ENCODE measurements at regions of chr3 and their contacts with region 1.

Region 1: DNA sequence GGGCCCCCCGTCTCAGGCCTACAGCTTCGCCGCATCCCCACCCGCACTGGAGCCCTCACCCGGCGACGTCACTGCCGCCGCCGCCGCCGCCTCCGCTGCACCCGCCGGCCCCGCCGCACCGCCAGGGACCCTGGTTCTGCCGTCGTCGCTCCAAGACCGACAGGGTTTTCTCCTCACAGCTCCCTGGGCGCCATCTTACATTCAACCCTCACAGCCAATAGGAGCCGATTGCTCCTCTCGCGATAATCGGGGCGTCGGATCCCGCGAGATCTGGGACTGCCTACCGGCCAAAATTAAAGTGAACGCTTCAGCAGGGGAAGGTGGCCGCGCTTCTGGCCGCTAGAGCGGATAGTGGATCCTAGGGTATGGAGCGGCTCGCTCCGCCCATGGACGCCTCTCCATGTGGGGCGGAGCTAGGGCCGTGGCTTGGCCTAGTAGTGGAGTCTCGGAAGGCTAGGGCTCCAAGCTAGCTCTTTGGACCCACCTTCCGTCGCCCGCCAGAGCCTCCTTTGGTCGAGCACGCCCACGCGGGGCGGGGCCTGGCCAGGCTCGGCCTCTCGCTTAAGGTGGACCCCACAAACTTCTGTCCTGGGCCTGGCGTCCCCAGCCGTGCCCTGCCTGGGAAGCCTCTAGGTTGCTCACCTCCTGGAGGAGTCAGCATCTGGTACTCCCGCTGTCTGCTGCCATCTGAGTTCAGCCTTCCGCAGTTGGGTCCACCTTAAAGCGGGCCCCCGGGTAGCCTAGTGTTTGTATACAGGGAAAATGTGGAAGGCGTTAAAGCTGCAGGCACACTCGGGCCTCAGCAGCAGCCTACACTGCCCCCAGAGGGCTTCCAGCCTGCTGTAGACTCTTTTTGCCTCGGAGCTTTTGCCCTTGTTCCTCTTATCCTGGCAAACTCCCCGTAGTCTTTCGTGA is at the start of gene QRICH1:
- DNase-seq: peak; percentile 99
- H3K4me3 ChIP-seq: peak within 1 kb of the TSS; percentile 78 to 100 (median 96)
- H3K27ac ChIP-seq: peak within 1 kb of the TSS; percentile 93 to 98 (median 97)
- H3K4me1 ChIP-seq: peaks cover 44 to 52% (median 50%) of the 10 kb centered on the region in 4 donors
- H3K27me3 ChIP-seq: no peaks in the 10 kb centered on the region
- CTCF ChIP-seq: peak; percentile 41 to 59 (median 49)
- EP300 ChIP-seq: no peak
- POLR2A ChIP-seq: peak; percentile 61
- total RNA-seq, gene QRICH1: 81.8 to 228 (median 91.2) TPM

Region 2: DNA sequence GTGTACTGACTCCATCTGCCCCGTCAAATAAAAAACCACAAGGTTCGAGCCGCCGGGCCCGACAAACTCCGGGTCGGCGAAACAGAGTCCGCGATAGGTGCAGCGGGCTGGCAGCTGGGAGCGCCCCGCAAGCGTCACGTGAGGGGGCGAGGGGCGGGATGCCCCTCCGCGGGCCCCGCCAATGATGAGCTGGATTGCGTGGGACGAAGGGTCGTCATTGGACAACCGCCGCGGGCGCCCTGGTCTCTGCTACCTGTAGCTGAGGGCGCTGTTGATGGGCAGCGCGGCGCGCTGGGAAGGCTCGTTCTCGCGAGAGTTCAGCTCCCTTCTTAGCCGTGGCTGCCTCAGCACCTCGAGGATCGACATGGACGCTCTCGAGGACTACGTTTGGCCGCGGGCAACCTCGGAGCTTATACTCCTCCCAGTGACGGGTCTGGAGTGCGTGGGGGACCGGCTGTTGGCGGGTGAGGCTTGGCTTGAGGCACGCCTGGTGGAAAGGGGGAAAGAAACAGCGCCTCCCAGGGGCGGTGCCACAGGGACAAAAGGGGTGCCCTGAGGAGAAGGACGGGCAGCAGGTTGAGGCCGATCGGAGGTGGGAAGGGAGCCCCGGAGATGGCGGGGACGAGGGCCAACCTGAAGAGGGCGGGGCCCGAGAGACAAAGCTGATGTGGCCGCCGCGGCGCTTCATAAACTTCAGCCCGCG is 86.9 kb before region 1 on chr3 and contains the start of gene WDR6:
- intact Hi-C with region 1: loop called (anchors 10 kb)
- DNase-seq: peak; percentile 99
- H3K4me3 ChIP-seq: peak within 1 kb of the TSS; percentile 65 to 94 (median 78)
- H3K27ac ChIP-seq: peak within 1 kb of the TSS; percentile 94 to 99 (median 94)
- H3K4me1 ChIP-seq: peaks cover 16 to 37% (median 30%) of the 10 kb centered on the region in 4 donors
- H3K27me3 ChIP-seq: no peaks in the 10 kb centered on the region
- CTCF ChIP-seq: peak; percentile 41 to 60 (median 41)
- EP300 ChIP-seq: no peak
- POLR2A ChIP-seq: no peak
- total RNA-seq, gene WDR6: 77.2 to 101 (median 89.0) TPM

Region 3: GRCh38 chr3:49017971-49018706 is 76.0 kb before region 1 on chr3 and contains the start of gene DALRD3:
- intact Hi-C with region 1: no loop called
- DNase-seq: no peak
- H3K4me3 ChIP-seq: peak within 1 kb of the TSS; percentile 70 to 95 (median 82)
- H3K27ac ChIP-seq: peak within 1 kb of the TSS; percentile 79 to 100 (median 91)
- H3K4me1 ChIP-seq: peaks cover 37 to 53% (median 46%) of the 10 kb centered on the region in 4 donors
- H3K27me3 ChIP-seq: no peaks in the 10 kb centered on the region
- CTCF ChIP-seq: no peak
- EP300 ChIP-seq: no peak
- POLR2A ChIP-seq: peak; percentile 22
- total RNA-seq, gene DALRD3: 12.4 to 31.5 (median 20.1) TPM

Region 4: DNA sequence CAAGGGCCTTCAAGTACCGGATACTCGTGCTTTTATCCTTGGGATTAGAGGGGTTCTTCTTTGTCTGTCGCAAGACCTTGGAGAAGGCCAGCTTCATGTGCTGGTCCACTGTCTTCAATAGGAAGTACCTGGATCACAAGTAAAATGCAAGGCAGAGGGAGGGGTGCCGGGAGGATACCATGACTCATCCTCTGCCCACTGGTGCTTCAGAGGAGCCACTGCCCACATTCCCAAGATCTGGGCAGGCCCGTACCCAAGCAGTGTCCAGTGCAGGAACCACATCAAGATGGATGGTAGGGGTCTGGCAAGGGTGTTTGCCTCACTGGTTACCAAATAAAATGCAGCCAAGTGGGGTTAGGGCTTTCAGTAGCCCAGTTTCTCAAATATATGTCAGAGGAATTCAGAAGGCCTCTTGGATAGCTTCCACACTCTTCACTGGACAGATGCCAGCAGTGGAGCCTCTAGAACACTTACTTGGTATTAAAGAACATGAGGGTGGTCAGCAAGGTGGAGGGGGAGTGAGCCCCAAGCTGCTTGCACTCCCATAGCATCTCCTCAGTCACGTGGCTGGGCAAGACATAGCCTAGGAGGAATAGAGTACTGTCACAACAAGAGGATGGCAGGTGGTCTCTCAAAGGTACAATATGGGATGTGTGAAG is 61.3 kb before region 1 on chr3:
- intact Hi-C with region 1: loop called (anchors 5 kb)
- DNase-seq: no peak
- H3K4me3 ChIP-seq: no peak overlapping the region
- H3K27ac ChIP-seq: no peak overlapping the region
- H3K4me1 ChIP-seq: peaks cover 12 to 25% (median 14%) of the 10 kb centered on the region in 4 donors
- H3K27me3 ChIP-seq: no peaks in the 10 kb centered on the region
- CTCF ChIP-seq: no peak
- EP300 ChIP-seq: no peak
- POLR2A ChIP-seq: no peak

Region 5: GRCh38 chr3:49133226-49133951 is 39.3 kb after region 1 on chr3:
- intact Hi-C with region 1: loop called (anchors 5 kb)
- DNase-seq: peak; percentile 94
- H3K4me3 ChIP-seq: peak overlapping the region; percentile 75 to 86 (median 85)
- H3K27ac ChIP-seq: peak overlapping the region; percentile 89 to 91 (median 90)
- H3K4me1 ChIP-seq: peaks cover 31 to 49% (median 43%) of the 10 kb centered on the region in 4 donors
- H3K27me3 ChIP-seq: no peaks in the 10 kb centered on the region
- CTCF ChIP-seq: peak in 2 of 3 experiments; percentile 1 to 13
- EP300 ChIP-seq: no peak
- POLR2A ChIP-seq: peak; percentile 33

Region 6: DNA sequence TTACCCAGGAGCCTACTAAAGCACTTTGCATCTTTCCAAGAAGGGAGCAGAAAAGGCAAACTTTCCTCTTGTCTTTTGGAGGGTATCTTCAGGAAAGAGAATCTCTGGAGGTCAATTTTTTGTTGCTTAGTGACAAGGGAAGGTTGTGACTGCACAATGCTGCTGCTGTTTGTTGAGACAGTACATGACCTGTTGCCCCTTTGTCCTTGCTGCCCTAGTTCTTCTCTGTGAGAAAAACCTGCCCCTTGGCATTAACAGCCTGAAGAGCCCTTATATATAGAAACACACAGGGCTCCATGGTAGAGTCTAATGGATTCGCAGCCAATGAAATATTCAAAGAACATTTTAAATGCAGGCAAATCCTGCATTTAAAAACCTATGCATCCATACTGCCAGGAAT is 97.6 kb after region 1 on chr3:
- intact Hi-C with region 1: no loop called
- DNase-seq: no peak
- H3K4me3 ChIP-seq: no peak overlapping the region
- H3K27ac ChIP-seq: no peak overlapping the region
- H3K4me1 ChIP-seq: peaks cover 0 to 5% (median 0%) of the 10 kb centered on the region in 4 donors
- H3K27me3 ChIP-seq: no peaks in the 10 kb centered on the region
- CTCF ChIP-seq: no peak
- EP300 ChIP-seq: no peak
- POLR2A ChIP-seq: no peak